PC-9 (cell line): ENCODE measurements at regions of chr1 and their contacts with region 1.

Region 1: GRCh38 chr1:183480971-183481441 is 8.7 kb downstream of the SMG7 start:
- DNase-seq: peak in 1 of 2 experiments; percentile 78
- H3K4me3 ChIP-seq: no peak overlapping the region
- H3K27ac ChIP-seq: peak overlapping the region; percentile 45
- H3K4me1 ChIP-seq: peaks cover 36% of the 10 kb centered on the region
- H3K27me3 ChIP-seq: no peaks in the 10 kb centered on the region
- CTCF ChIP-seq: no peak

Region 2: GRCh38 chr1:183247931-183248330 is 233.1 kb before region 1 on chr1:
- CTCF ChIA-PET with region 1: interaction called, 12 read pairs
- POLR2A ChIA-PET with region 1: no interaction called
- intact Hi-C with region 1: no loop called
- DNase-seq: no peak
- H3K4me3 ChIP-seq: no peak overlapping the region
- H3K27ac ChIP-seq: no peak overlapping the region
- H3K4me1 ChIP-seq: peaks cover 6% of the 10 kb centered on the region
- H3K27me3 ChIP-seq: no peaks in the 10 kb centered on the region
- CTCF ChIP-seq: no peak

Region 3: DNA sequence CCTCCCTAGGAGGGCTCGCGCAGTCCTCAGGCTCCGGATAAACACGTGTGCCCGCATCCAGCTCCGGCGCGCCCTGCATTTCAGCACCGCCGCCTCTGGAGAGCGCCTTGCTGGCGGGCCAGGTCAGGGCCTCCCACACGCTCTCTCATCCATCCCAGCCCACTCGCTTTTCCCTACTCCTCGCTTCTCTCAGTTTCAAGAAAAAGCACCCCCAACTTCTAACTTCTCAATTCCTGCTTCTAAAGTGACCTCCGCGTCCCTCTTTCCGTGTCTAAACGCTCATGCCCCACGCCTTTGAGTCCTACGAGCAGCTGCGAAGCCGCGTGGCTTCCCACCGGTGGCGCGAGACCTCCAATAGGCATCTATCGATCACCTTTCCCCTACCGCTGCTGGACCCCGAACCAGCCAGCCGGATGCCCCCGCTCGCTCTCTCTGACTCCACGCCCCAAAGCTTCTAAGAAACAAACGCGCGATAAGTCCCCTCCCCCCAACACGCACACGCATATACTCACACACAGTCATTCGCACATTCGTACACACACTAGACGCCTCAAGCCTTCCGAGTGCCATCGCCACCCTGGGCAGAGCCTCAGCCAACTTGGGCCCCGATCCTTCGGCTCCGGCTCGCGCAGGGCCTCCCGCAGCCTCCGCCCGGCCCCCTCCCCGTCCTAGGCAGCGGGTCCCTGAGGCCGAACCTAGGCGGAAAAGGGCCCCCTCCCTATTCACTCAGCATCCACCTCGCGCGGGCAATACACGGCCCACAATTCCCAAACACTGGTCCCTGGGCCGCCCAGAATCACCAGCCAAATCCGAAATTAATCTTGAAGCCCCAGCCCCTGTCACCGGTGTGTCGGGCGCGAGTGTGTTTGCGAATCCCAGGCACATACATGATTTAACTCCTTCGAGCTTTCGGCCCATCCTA is 63.9 kb before region 1 on chr1:
- CTCF ChIA-PET with region 1: no interaction called
- POLR2A ChIA-PET with region 1: no interaction called
- intact Hi-C with region 1: no loop called
- DNase-seq: no peak
- H3K4me3 ChIP-seq: peak overlapping the region; percentile 83; the same call in 1 of the 2 replicates
- H3K27ac ChIP-seq: peak overlapping the region; percentile 43; the same call in 1 of the 2 replicates
- H3K4me1 ChIP-seq: peaks cover 31% of the 10 kb centered on the region
- H3K27me3 ChIP-seq: no peaks in the 10 kb centered on the region
- CTCF ChIP-seq: no peak

Region 4: GRCh38 chr1:183506561-183506960 is 25.6 kb after region 1 on chr1:
- CTCF ChIA-PET with region 1: no interaction called
- POLR2A ChIA-PET with region 1: interaction called, 16 read pairs
- intact Hi-C with region 1: no loop called
- DNase-seq: no peak
- H3K4me3 ChIP-seq: no peak overlapping the region
- H3K27ac ChIP-seq: no peak overlapping the region
- H3K4me1 ChIP-seq: no peaks in the 10 kb centered on the region
- H3K27me3 ChIP-seq: no peaks in the 10 kb centered on the region
- CTCF ChIP-seq: no peak

Region 5: DNA sequence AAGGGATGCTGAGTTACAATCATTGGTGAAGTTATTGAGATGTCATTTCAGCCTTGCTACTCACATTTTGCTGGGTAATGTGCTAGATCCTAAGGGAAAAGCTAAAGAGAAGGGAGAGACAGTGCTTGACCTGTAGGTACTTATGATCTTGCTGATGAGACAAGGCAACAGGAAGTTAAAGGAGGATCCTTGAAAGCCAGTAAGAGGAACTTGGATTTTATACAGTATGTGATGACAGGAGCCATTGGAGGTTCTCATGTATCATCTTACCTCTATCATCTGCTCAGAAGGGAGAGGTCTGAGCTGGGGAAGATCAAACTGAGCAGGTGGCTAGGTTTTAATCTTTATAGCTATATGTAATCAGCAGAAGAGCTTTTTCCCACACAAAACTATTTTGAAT is 165.8 kb after region 1 on chr1:
- CTCF ChIA-PET with region 1: no interaction called
- POLR2A ChIA-PET with region 1: no interaction called
- intact Hi-C with region 1: no loop called
- DNase-seq: no peak
- H3K4me3 ChIP-seq: no peak overlapping the region
- H3K27ac ChIP-seq: no peak overlapping the region
- H3K4me1 ChIP-seq: no peaks in the 10 kb centered on the region
- H3K27me3 ChIP-seq: no peaks in the 10 kb centered on the region
- CTCF ChIP-seq: no peak